Left colon (tissue), 2 donors: ENCODE measurements at regions of chr5 and their contacts with region 1.

Region 1: GRCh38 chr5:691817-692528 is 1.2 kb downstream of the TPPP start:
- DNase-seq: no peak
- ATAC-seq: no peak

Region 2: GRCh38 chr5:776792-777711 is 85.1 kb after region 1 on chr5:
- intact Hi-C with region 1: loop called in 1 of 2 experiments (anchors 10 kb)
- DNase-seq: peak in 1 of 2 donors; percentile 38
- ATAC-seq: no peak

Region 3: GRCh38 chr5:816176-816575 is 124.2 kb after region 1 on chr5:
- intact Hi-C with region 1: no loop called
- DNase-seq: no peak
- ATAC-seq: no peak

Region 4: DNA sequence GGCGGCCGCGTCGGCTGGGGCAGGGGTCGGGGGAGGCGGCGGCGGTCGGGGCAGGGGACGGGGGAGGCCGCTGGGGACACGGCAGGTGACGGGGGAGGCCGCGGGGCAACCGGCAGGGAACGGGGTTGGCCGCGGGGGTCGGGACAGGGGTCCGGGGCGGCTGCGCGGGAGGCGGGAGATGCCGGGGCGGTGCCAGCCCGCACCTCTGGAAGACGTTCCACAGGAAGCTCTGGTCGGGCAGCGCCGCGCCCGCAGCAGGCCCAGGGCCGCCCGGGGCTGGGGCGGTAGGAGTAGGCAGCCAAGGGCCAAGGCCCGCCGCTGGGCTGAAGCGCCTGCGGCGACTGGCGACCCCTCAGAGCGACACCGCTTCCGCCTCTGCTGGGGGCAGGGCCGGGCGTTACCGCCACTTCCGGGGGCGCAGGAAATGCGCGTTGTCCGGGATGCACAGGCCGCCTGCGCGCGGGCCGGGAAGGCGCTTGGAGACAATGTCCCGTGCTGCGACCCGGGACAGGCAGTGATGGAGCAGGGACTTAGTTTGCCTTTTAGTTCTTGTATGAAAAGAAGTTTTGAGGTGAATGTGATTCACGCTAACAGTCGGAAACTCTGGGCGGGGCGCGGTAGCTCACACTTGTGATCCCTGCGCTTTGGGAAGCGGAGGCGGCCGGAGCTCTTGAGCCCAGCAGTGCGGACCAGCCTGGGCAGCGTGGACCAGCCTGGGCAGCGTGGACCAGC is 941.8 kb after region 1 on chr5:
- intact Hi-C with region 1: no loop called
- DNase-seq: peak; percentile 84 to 86
- ATAC-seq: peak; percentile 95